ENCODE measurements at regions of chr7 and their contacts with region 1.

Region 1: GRCh38 chr7:104943502-104944343 is 70.3 kb upstream of the KMT2E start:
- DNase-seq: peak; percentile 83
- ATAC-seq: peak; percentile 75
- H3K4me3 ChIP-seq: peak overlapping the region; percentile 39; the same call in 1 of the 2 replicates
- H3K27ac ChIP-seq: peak overlapping the region; percentile 93
- H3K4me1 ChIP-seq: peaks cover 39% of the 10 kb centered on the region
- H3K27me3 ChIP-seq: no peaks in the 10 kb centered on the region
- CTCF ChIP-seq: no peak
- EP300 ChIP-seq: peak; percentile 90 to 91
- POLR2A ChIP-seq: peak; percentile 55
- RAD21 ChIP-seq: no peak

Region 2: GRCh38 chr7:104931181-104931781 is 12.4 kb before region 1 on chr7:
- CTCF ChIA-PET with region 1: interaction called, 13 read pairs
- POLR2A ChIA-PET with region 1: interaction called, 4 read pairs
- RAD21 ChIA-PET with region 1: interaction called, 17 read pairs
- SMC1A ChIA-PET with region 1: interaction called, 7 read pairs
- in situ Hi-C with region 1: no loop called
- intact Hi-C with region 1: no loop called
- DNase-seq: no peak
- ATAC-seq: no peak
- H3K4me3 ChIP-seq: no peak overlapping the region
- H3K27ac ChIP-seq: no peak overlapping the region
- H3K4me1 ChIP-seq: no peaks in the 10 kb centered on the region
- H3K27me3 ChIP-seq: no peaks in the 10 kb centered on the region
- CTCF ChIP-seq: no peak
- EP300 ChIP-seq: no peak
- POLR2A ChIP-seq: no peak
- RAD21 ChIP-seq: no peak

Region 3: DNA sequence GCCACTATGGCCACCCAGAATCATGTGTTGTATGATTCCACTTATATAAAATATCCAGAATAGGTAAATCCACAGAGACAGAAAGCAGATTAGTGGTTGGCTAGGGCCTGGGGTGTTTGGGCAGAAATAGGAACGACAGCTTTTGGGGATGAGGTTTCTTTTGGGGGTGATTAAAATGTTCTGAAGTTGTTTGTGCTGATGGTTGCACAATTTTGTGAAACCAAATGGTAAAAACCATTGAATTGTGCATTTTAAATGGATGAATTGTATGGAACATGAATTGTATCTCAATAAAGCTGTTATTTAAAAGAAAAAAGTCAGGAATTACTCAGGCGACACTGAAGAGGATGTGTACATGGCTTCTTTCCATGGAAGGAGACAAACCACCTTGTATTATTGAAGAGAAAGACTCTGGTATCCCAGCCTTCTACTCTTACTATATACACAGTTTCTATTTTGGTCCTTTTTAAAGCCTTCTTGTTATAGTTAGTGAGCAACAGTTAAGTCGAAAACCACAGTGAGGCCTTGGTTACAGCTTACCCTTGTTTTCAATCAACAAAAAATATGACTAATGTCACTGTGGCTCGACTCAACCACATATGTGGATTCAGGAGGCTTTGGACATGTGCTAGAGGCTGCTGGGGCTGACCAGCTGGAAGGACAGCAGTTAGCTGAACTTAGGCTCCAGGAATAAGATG is 13.2 kb after region 1 on chr7:
- CTCF ChIA-PET with region 1: interaction called, 7 read pairs
- POLR2A ChIA-PET with region 1: interaction called, 55 read pairs
- RAD21 ChIA-PET with region 1: interaction called, 34 read pairs
- SMC1A ChIA-PET with region 1: interaction called, 58 read pairs
- in situ Hi-C with region 1: no loop called
- intact Hi-C with region 1: loop called (anchors 1 kb)
- DNase-seq: peak; percentile 77
- ATAC-seq: peak; percentile 94
- H3K4me3 ChIP-seq: no peak overlapping the region
- H3K27ac ChIP-seq: peak overlapping the region; percentile 58
- H3K4me1 ChIP-seq: peaks cover 17% of the 10 kb centered on the region
- H3K27me3 ChIP-seq: no peaks in the 10 kb centered on the region
- CTCF ChIP-seq: no peak
- EP300 ChIP-seq: peak; percentile 83 to 91
- POLR2A ChIP-seq: no peak
- RAD21 ChIP-seq: no peak

Measured in GM12878 (cell line).